ENCODE measurements at regions of chr5 and their contacts with region 1.

Region 1: GRCh38 chr5:134439210-134439664 is 27.6 kb upstream of the CDKN2AIPNL start:
- DNase-seq: peak; percentile 77
- ATAC-seq: peak; percentile 84

Region 2: GRCh38 chr5:134304311-134304710 is 134.9 kb before region 1 on chr5:
- intact Hi-C with region 1: no loop called
- DNase-seq: no peak
- ATAC-seq: no peak

Region 3: DNA sequence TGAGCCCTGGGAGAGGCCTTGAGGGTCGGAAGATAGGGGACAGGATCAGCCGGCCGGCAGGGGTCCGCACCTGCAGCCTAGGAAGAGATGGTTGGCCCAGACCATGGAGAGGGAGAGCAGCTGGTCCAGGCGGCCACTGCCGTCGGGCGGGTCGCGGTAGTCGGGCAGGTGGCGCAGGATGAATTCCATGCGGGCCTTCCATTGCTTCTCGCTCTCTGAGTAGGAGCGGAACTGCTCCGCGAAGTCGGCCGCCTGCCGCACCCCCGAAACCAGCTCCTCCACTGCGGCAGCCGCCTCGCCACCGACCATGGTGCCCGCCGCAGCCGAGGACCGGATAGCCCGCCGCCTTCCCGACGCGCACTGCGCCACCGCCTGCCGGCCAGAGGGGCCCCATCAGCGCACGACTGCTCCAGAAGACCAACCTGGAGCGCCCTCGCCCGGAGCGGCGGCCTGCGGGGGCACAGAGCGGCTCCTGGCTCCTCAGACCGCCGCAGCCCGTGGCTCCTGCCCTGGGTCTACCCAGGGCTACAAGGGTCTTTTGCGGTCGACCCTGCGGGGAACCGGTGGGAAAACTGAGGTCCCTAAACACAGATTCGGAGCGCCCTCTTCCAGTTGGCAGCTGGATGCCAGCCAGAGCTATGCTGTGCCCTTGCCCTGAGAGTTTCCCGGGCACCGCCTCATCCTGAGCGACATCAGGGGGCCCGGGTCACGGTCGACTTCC is 27.5 kb before region 1 on chr5 and contains the start of gene CDKN2AIPNL:
- intact Hi-C with region 1: loop called (anchors 2 kb)
- DNase-seq: peak; percentile 96
- ATAC-seq: peak; percentile 100
- total RNA-seq, gene CDKN2AIPNL: 45.7 TPM

Region 4: DNA sequence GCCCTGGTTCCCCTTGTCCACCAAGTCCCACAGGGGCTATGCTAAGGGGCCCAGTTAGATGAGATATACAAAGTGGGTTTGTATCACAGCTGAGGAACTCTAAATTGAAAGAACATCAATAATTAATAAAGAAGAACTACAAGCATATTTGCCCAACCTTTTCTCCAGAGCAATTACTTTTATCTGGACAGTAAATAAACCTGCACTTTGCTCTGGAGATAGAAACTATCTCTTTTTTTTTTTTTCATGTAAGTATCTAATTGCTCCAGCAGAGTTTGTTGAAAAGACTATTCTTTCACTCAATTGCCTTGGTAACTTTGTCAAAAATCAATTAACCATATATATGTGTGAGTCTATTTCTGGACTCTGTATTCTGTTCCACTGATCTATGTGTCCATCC is 21.5 kb before region 1 on chr5:
- intact Hi-C with region 1: loop called (anchors 2 kb)
- DNase-seq: no peak
- ATAC-seq: no peak